Aorta (tissue), 5 donors: ENCODE measurements at regions of chr11 and their contacts with region 1.

Region 1: GRCh38 chr11:92224407-92225124 is at the start of gene FAT3:
- DNase-seq: peak; percentile 53 to 86
- ATAC-seq: peak; percentile 68
- H3K4me3 ChIP-seq: peak within 1 kb of the TSS; percentile 8 to 67
- H3K27ac ChIP-seq: peak within 1 kb of the TSS in 1 of 2 donors; percentile 30
- H3K4me1 ChIP-seq: no peaks in the 10 kb centered on the region
- H3K27me3 ChIP-seq: no peaks in the 10 kb centered on the region
- total RNA-seq, gene FAT3: 14.8 to 37.5 TPM

Region 2: GRCh38 chr11:92180664-92181251 is 43.8 kb before region 1 on chr11:
- intact Hi-C with region 1: no loop called
- DNase-seq: peak in 1 of 2 donors; percentile 51
- ATAC-seq: peak; percentile 62
- H3K4me3 ChIP-seq: no peak overlapping the region
- H3K27ac ChIP-seq: no peak overlapping the region
- H3K4me1 ChIP-seq: no peaks in the 10 kb centered on the region
- H3K27me3 ChIP-seq: no peaks in the 10 kb centered on the region

Region 3: GRCh38 chr11:92276773-92277172 is 52.2 kb after region 1 on chr11:
- intact Hi-C with region 1: loop called in 1 of 2 experiments (anchors 10 kb)
- DNase-seq: no peak
- ATAC-seq: no peak
- H3K4me3 ChIP-seq: no peak overlapping the region
- H3K27ac ChIP-seq: peak overlapping the region in 1 of 2 donors; percentile 77
- H3K4me1 ChIP-seq: peaks cover 2 to 4% of the 10 kb centered on the region in 2 donors
- H3K27me3 ChIP-seq: no peaks in the 10 kb centered on the region

Region 4: DNA sequence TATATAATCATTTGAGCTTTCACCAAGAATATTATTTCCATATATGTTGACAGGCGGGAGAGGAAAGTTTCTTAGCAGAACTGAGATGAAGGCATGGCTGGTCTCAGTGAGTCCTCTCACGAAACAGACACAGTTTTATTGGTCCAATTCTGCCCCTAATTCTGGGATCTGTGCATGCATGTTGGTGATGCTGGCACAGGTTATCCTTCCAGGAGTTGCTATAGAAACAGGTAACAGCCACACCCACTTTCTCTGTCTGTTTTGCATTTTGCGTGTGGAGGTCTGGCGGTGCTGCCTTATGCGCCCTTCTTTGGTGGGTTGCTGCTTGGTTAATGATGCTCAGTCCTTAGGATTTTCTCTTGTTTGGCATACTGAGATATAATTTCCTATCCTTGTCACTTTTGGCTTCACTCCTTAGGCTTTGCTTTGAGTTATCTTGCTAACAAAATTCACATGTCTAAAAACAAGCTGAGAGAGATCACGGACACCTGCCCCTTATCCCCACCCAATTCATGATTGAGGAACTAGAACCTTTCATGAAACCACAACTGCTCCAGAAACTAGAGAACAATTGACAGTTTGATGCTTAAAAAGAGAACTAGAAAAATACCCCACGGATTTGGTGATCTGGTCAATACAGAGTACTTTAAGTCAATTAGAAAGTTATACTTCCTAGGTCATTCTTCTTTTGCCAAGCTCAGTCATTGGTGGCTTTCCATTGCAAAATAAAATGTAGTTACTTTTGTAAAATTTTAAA is 189.4 kb after region 1 on chr11:
- intact Hi-C with region 1: loop called in 1 of 2 experiments (anchors 10 kb)
- DNase-seq: no peak
- ATAC-seq: no peak
- H3K4me3 ChIP-seq: peak overlapping the region in 1 of 2 donors; percentile 20
- H3K27ac ChIP-seq: peak overlapping the region in 1 of 2 donors; percentile 43
- H3K4me1 ChIP-seq: peaks cover 0 to 5% of the 10 kb centered on the region in 2 donors
- H3K27me3 ChIP-seq: no peaks in the 10 kb centered on the region

Region 5: GRCh38 chr11:92540096-92540495 is 315.5 kb after region 1 on chr11:
- intact Hi-C with region 1: loop called in 1 of 2 experiments (anchors 10 kb)
- DNase-seq: no peak
- ATAC-seq: no peak
- H3K4me3 ChIP-seq: no peak overlapping the region
- H3K27ac ChIP-seq: no peak overlapping the region
- H3K4me1 ChIP-seq: no peaks in the 10 kb centered on the region
- H3K27me3 ChIP-seq: no peaks in the 10 kb centered on the region